Activated naive CD4-positive, alpha-beta T cell treated with anti-CD3 and anti-CD28 coated beads for 36 hours (primary cell): ENCODE measurements at regions of chr5 and their contacts with region 1.

Region 1: GRCh38 chr5:35651002-35651756 is 33.5 kb downstream of the SPEF2 start:
- DNase-seq: peak; percentile 83
- H3K4me3 Mint-ChIP-seq: no peak overlapping the region
- H3K27ac Mint-ChIP-seq: no peak overlapping the region
- H3K4me1 Mint-ChIP-seq: peaks cover 9% of the 10 kb centered on the region
- H3K27me3 Mint-ChIP-seq: no peaks in the 10 kb centered on the region

Region 2: GRCh38 chr5:35617435-35618303 is 33.5 kb before region 1 on chr5 and contains the start of gene SPEF2:
- CTCF ChIA-PET with region 1: interaction called, 8 read pairs
- intact Hi-C with region 1: loop called (anchors 2 kb)
- DNase-seq: peak; percentile 86
- H3K4me3 Mint-ChIP-seq: peak within 1 kb of the TSS; percentile 90
- H3K27ac Mint-ChIP-seq: peak within 1 kb of the TSS; percentile 88
- H3K4me1 Mint-ChIP-seq: peaks cover 16% of the 10 kb centered on the region
- H3K27me3 Mint-ChIP-seq: no peaks in the 10 kb centered on the region
- total RNA-seq, gene SPEF2: 6.5 to 6.6 TPM

Region 3: GRCh38 chr5:35665096-35665495 is 13.9 kb after region 1 on chr5:
- CTCF ChIA-PET with region 1: interaction called, 11 read pairs
- intact Hi-C with region 1: no loop called
- DNase-seq: no peak
- H3K4me3 Mint-ChIP-seq: no peak overlapping the region
- H3K27ac Mint-ChIP-seq: no peak overlapping the region
- H3K4me1 Mint-ChIP-seq: peaks cover 45% of the 10 kb centered on the region
- H3K27me3 Mint-ChIP-seq: no peaks in the 10 kb centered on the region

Region 4: GRCh38 chr5:35694481-35694880 is 43.3 kb after region 1 on chr5:
- CTCF ChIA-PET with region 1: no interaction called
- intact Hi-C with region 1: no loop called
- DNase-seq: no peak
- H3K4me3 Mint-ChIP-seq: no peak overlapping the region
- H3K27ac Mint-ChIP-seq: no peak overlapping the region
- H3K4me1 Mint-ChIP-seq: no peaks in the 10 kb centered on the region
- H3K27me3 Mint-ChIP-seq: no peaks in the 10 kb centered on the region

Region 5: DNA sequence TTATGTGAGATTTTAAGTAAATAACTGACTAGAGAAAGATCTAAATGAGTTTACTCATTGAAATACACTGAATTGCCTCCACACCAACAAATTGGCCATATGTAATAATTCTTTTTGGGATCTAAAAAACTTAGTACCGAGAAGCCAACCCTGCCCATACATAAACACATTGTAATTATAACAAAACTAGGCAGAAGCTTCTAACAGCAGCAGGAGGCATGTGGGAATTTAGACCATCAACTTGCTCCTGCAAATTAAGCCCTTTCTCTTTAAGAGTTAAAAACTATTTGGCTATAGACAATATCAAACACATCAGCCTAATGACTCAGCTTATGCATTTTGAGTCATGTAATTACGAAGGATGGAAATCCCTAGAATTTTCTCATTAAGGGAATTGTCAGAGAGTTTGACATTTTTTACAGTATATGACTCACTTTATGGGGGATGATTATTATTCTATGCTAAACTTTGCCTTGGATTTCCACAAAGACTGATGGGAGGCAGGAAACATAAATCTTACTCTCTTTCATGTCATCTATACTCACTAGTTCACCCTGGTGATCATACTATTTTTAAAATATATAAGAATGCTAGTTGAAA is 206.5 kb after region 1 on chr5:
- CTCF ChIA-PET with region 1: interaction called, 10 read pairs
- intact Hi-C with region 1: loop called (anchors 1 kb)
- DNase-seq: no peak
- H3K4me3 Mint-ChIP-seq: peak overlapping the region; percentile 91
- H3K27ac Mint-ChIP-seq: peak overlapping the region; percentile 100
- H3K4me1 Mint-ChIP-seq: peaks cover 57% of the 10 kb centered on the region
- H3K27me3 Mint-ChIP-seq: no peaks in the 10 kb centered on the region

Region 6: DNA sequence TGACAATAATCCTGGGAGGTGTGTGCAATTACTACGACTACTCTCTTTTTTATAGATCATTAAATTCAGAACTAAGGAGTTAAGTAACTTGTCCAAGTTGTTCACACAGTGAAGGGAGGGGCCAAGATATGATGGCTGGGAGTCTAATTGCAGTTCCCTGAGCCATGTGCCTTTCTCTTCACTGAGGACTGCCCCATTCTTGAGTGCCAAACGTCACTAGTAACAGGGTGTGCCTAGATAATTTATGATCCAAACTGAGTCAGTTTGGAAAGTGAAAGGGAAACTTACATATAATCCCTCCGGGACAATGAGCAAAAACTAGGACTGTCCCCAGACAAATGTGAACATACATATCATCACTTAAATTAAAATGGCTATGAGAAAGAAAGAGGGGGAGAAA is 225.7 kb after region 1 on chr5:
- CTCF ChIA-PET with region 1: interaction called, 10 read pairs
- intact Hi-C with region 1: no loop called
- DNase-seq: peak; percentile 43
- H3K4me3 Mint-ChIP-seq: no peak overlapping the region
- H3K27ac Mint-ChIP-seq: peak overlapping the region; percentile 88
- H3K4me1 Mint-ChIP-seq: peaks cover 85% of the 10 kb centered on the region
- H3K27me3 Mint-ChIP-seq: no peaks in the 10 kb centered on the region